GM23248 (cell line): ENCODE measurements at regions of chr7 and their contacts with region 1.

Region 1: DNA sequence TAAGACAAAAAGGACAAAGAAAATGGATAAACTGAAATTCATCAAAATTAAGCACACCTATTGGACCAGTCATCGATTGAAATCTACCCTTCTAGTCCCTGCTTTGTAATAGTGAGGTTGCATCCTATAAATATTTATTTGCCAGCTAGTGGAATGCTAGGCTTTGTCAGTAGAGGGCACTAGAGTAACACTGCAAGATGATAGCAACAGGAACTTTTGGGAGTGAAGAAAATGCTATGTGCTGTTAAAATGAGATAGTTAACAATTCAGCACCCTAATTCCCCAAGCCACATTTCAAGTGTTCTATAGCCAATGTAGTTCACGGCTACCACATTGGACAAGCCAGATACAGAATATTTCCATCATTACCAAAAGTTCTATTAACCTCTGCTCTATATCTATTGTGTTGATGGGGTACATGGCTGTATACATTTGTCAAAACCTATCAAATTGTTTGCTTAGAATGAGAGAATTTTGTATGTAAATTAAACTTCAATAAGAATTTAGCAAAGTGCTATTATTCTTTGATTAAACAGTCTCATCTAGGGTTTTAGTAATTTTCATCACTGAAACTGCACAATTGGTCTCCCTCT is 69.8 kb downstream of the LSMEM1 start:
- DNase-seq: peak; percentile 75
- H3K4me3 ChIP-seq: no peak overlapping the region
- H3K27ac ChIP-seq: no peak overlapping the region
- H3K4me1 ChIP-seq: peaks cover 6% of the 10 kb centered on the region; the same call in 1 of the 2 replicates
- H3K27me3 ChIP-seq: no peaks in the 10 kb centered on the region

Region 2: GRCh38 chr7:112898432-112899290 is 348.1 kb after region 1 on chr7:
- in situ Hi-C with region 1: loop called (anchors 25 kb)
- DNase-seq: peak; percentile 72
- H3K4me3 ChIP-seq: no peak overlapping the region
- H3K27ac ChIP-seq: no peak overlapping the region
- H3K4me1 ChIP-seq: no peaks in the 10 kb centered on the region
- H3K27me3 ChIP-seq: no peaks in the 10 kb centered on the region

Region 3: GRCh38 chr7:113421696-113422330 is 871.2 kb after region 1 on chr7:
- in situ Hi-C with region 1: loop called (anchors 25 kb)
- DNase-seq: peak; percentile 91
- H3K4me3 ChIP-seq: no peak overlapping the region
- H3K27ac ChIP-seq: no peak overlapping the region
- H3K4me1 ChIP-seq: no peaks in the 10 kb centered on the region
- H3K27me3 ChIP-seq: no peaks in the 10 kb centered on the region; the same call in 1 of the 2 replicates

Region 4: GRCh38 chr7:113698556-113699220 is 1148.1 kb after region 1 on chr7:
- in situ Hi-C with region 1: loop called (anchors 25 kb)
- DNase-seq: peak; percentile 59
- H3K4me3 ChIP-seq: peak overlapping the region; percentile 8; the same call in 1 of the 2 replicates
- H3K27ac ChIP-seq: no peak overlapping the region
- H3K4me1 ChIP-seq: no peaks in the 10 kb centered on the region
- H3K27me3 ChIP-seq: 0 out of 2 replicates have a peak, but pooled peaks cover 5% of the 10 kb centered on the region